Right lobe of liver (tissue), 6 donors: ENCODE measurements at regions of chr9 and their contacts with region 1.

Region 1: GRCh38 chr9:70111042-70111602 is 67.5 kb downstream of the MAMDC2 start:
- DNase-seq: peak; percentile 73 to 78 (median 77)
- ATAC-seq: peak; percentile 87 to 92 (median 89)
- H3K4me3 ChIP-seq: no peak overlapping the region
- H3K27ac ChIP-seq: no peak overlapping the region
- H3K4me1 ChIP-seq: no peaks in the 10 kb centered on the region
- H3K27me3 ChIP-seq: no peaks in the 10 kb centered on the region
- CTCF ChIP-seq: peak; percentile 75 to 93 (median 91)
- POLR2A ChIP-seq: no peak

Region 2: GRCh38 chr9:69971643-69972449 is 139.3 kb before region 1 on chr9:
- intact Hi-C with region 1: loop called (anchors 5 kb)
- DNase-seq: peak; percentile 63 to 70 (median 67)
- ATAC-seq: peak; percentile 67 to 76 (median 74)
- H3K4me3 ChIP-seq: no peak overlapping the region
- H3K27ac ChIP-seq: no peak overlapping the region
- H3K4me1 ChIP-seq: no peaks in the 10 kb centered on the region
- H3K27me3 ChIP-seq: no peaks in the 10 kb centered on the region
- CTCF ChIP-seq: peak; percentile 67 to 86 (median 80)
- POLR2A ChIP-seq: no peak